PC-9 (cell line): ENCODE measurements at regions of chr7 and their contacts with region 1.

Region 1: DNA sequence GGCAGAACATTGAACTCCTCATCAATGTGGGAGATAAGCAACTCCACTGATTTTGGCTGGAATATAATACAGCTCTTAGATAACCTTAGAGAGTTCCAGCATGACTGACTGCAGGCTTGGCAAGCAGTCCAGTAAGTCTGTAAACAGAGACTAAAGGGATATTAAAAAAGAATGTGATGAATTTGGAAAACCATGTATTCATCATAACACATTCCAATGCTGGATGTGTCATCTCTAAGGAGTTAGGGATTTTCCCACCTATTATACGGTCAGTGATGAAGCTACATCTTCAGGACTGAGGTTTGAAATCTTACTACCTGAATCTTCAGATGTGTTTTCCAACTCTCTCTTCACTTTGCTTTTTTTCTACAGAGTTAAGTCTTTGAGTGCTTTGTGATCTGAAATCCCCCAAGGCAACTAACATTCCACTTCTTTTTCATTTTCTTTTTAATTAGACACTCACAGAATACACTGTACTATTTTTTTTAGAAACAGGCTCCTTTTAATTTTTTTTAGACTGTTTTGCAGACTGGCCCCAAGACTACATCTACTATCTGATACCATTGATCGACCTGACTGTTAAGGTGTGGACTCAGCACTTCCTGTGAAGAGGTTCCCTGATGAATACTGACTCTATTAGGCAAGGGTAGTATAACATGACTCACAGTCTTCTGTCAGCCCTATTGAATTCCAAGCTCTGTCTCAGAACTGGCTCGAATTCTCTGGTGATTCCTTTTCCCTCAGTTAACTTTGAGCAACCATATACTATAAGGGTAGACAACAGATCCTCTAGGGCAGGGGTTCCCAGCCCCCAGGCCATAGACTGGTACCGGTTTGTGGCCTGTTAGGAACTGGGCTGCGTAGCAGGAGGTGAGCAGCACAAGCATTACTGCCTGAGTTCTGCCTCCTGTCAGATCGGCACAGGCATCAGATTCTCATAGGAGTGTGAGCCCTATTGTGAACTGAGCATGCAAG is 678.2 kb downstream of the GRM8 start:
- DNase-seq: peak in 1 of 2 experiments; percentile 25
- H3K4me3 ChIP-seq: no peak overlapping the region
- H3K27ac ChIP-seq: peak overlapping the region; percentile 66
- H3K4me1 ChIP-seq: 0 out of 2 replicates have a peak, but pooled peaks cover 7% of the 10 kb centered on the region
- H3K27me3 ChIP-seq: no peaks in the 10 kb centered on the region
- CTCF ChIP-seq: no peak

Region 2: GRCh38 chr7:126302639-126303038 is 271.9 kb before region 1 on chr7:
- CTCF ChIA-PET with region 1: interaction called, 10 read pairs
- POLR2A ChIA-PET with region 1: no interaction called
- intact Hi-C with region 1: no loop called
- DNase-seq: no peak
- H3K4me3 ChIP-seq: no peak overlapping the region
- H3K27ac ChIP-seq: no peak overlapping the region
- H3K4me1 ChIP-seq: no peaks in the 10 kb centered on the region
- H3K27me3 ChIP-seq: no peaks in the 10 kb centered on the region
- CTCF ChIP-seq: 0 out of 2 replicates have a peak, but pooled peaks have one; percentile 24

Region 3: DNA sequence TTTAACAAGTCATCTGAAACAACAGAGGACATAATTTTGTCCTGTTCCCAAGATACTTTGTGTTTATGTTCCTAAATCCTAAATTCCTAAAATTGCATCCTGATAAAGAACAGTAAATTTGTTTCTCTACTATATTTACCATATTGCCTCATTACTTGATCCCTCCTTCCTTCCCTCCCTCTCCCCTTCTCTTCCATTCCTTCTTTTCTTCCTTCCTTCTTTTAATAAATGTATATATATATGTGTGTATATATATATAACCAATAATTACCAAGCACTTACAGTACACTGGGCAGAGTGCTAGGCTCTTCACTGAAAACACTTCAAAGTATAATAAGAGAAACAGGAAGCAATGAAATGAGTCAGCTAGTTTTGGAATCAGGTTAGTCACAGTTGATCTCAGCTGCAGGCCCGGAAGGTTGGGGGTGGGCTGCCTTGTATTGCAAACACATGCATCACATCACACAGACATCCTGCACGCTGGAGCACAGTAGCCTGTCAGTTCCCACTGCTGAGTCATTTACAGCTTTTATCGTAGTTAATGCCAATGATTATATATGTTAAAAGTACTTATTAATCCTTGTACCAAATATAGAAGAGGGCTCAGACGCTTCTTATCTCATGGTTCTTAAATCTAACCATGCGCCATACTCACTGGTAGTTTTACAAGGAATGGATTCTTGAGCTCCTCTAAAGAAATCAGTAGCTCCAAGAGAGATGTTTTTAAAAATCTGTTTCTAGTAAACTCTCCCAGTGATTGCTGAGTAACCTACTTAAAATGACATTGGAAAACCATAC is 126.4 kb after region 1 on chr7:
- CTCF ChIA-PET with region 1: interaction called, 3 read pairs
- POLR2A ChIA-PET with region 1: no interaction called
- intact Hi-C with region 1: loop called (anchors 10 kb)
- DNase-seq: peak; percentile 83 to 90
- H3K4me3 ChIP-seq: peak overlapping the region; percentile 35; the same call in 1 of the 2 replicates
- H3K27ac ChIP-seq: peak overlapping the region; percentile 93
- H3K4me1 ChIP-seq: peaks cover 35% of the 10 kb centered on the region
- H3K27me3 ChIP-seq: no peaks in the 10 kb centered on the region
- CTCF ChIP-seq: no peak